Activated CD4-positive, alpha-beta T cell treated with anti-CD3 and anti-CD28 coated beads, Interleukin-2, amount 10 ng/mL, durations not matched to agents 7 days and 5 days (primary cell): ENCODE measurements at regions of chr17 and their contacts with region 1.

Region 1: GRCh38 chr17:76523084-76524037 is 14.1 kb downstream of the CYGB start:
- DNase-seq: peak; percentile 80
- H3K4me3 Mint-ChIP-seq: no peak overlapping the region
- H3K27ac Mint-ChIP-seq: peak overlapping the region; percentile 82
- H3K4me1 Mint-ChIP-seq: peaks cover 31% of the 10 kb centered on the region
- H3K27me3 Mint-ChIP-seq: no peaks in the 10 kb centered on the region

Region 2: DNA sequence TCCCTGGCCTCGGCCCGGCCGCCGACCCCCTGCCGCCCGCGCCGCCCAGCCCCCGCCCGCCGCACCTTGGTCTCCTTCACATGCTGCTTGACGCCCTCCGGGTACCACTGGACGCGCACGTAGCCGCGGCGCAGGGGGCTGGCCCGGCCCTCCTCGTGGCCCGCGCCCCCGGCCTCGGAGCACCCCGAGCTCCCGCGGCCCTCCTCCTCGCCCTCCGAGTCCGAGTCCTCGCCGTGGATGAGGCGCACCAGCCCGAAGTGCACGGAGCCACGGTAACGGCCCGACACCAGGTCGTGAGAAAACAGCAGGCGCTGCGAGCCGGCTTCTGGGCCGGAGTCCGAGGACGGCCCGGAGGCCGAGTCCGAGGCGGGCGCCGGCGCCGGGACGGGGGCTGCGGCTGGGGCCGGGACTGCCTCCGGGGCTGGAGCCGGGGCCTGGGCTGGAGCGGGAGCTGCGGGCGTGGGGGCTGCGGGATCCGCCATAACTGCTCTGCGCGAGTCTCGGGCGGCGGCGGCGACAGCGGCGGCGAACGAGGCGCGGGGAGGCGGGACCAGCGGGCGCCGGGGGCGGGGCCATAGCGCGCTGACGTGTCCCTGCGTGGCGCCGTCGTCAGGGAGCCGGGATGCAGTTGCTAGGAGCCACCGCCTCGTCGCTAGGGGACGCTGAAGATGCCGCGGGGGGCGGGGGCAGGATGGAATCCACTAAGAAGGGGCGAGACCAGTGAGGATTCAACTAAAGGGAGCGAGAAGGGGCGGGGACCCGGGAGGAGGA is 70.5 kb before region 1 on chr17 and contains the start of gene UBE2O:
- CTCF ChIA-PET with region 1: no interaction called
- POLR2A ChIA-PET with region 1: no interaction called
- DNase-seq: peak; percentile 95
- H3K4me3 Mint-ChIP-seq: peak within 1 kb of the TSS; percentile 87
- H3K27ac Mint-ChIP-seq: peak within 1 kb of the TSS; percentile 79
- H3K4me1 Mint-ChIP-seq: peaks cover 43% of the 10 kb centered on the region
- H3K27me3 Mint-ChIP-seq: peaks cover 2% of the 10 kb centered on the region
- total RNA-seq, gene UBE2O: 30.5 to 31.3 TPM

Region 3: GRCh38 chr17:76540381-76541300 is 17.3 kb after region 1 on chr17:
- CTCF ChIA-PET with region 1: interaction called, 19 read pairs
- POLR2A ChIA-PET with region 1: no interaction called
- DNase-seq: peak; percentile 23
- H3K4me3 Mint-ChIP-seq: no peak overlapping the region
- H3K27ac Mint-ChIP-seq: no peak overlapping the region
- H3K4me1 Mint-ChIP-seq: peaks cover 10% of the 10 kb centered on the region
- H3K27me3 Mint-ChIP-seq: peaks cover 57% of the 10 kb centered on the region

Region 4: GRCh38 chr17:76557368-76558197 is 34.2 kb after region 1 on chr17:
- CTCF ChIA-PET with region 1: interaction called, 13 read pairs
- POLR2A ChIA-PET with region 1: no interaction called
- DNase-seq: peak; percentile 96
- H3K4me3 Mint-ChIP-seq: peak overlapping the region; percentile 89
- H3K27ac Mint-ChIP-seq: peak overlapping the region; percentile 94
- H3K4me1 Mint-ChIP-seq: peaks cover 52% of the 10 kb centered on the region
- H3K27me3 Mint-ChIP-seq: no peaks in the 10 kb centered on the region

Region 5: DNA sequence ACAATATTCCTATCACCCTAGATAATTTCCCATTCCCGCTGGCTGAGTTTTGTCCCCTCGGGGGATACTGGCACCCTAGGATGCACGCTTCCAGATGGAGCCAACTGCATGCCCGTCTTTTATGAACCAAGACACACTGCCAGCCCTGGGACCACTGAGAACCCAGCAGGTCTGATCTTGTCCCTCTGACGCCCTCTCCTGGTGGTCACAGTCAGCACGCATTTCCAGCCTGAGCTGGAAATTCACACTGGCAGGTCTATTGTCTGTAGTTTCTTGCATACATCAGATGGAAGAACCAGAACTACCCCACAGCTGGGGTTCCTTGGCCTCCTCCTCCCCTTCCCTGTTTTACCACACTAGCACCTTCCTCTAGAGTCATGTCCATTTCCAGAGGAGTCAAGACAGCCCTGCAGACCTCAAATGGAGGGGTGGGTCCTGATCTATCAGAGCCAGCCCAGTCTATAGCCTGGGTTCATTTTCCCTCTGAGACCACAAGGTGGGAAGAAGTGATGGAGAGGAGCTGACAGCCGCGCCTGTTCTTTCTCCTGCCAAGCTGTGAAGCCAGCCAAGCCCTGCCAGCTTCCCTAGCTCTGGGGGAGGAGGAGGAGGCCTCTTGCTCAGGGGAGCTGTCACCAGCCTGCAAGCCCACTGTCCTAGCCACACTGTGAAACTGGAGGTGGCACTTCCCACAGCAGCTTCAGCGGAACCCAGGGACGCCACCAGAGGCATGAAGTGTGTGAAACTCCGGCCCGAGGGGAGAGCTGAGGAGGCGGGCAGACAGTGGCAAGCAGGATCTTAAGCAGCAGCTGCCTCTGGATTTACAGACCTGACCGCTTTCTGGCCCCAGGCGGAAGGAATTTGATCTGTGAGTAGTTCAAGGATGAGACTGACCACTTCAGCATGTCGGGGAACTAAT is 158.1 kb after region 1 on chr17:
- CTCF ChIA-PET with region 1: interaction called, 10 read pairs
- POLR2A ChIA-PET with region 1: no interaction called
- DNase-seq: peak; percentile 83
- H3K4me3 Mint-ChIP-seq: no peak overlapping the region
- H3K27ac Mint-ChIP-seq: peak overlapping the region; percentile 62
- H3K4me1 Mint-ChIP-seq: peaks cover 6% of the 10 kb centered on the region
- H3K27me3 Mint-ChIP-seq: no peaks in the 10 kb centered on the region